ENCODE measurements at regions of chr16 and their contacts with region 1.

Region 1: DNA sequence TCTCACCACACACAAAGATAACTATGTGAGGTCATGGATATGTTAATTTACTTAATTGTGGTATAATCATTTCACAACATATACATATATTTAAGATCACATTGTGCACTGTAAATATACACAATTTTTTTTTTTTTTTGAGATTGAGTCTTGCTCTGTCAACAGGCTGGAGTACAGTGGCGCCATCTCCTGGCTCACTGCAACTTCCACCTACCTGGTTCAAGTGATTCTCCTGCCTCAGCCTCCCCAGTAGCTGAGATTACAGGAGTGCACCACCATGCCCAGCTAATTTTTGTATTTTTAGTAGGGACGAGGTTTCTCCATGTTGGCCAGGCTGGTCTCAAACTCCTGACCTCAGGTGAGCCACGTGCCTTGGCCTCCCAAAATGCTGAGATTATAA is 11.5 kb upstream of the PRSS54 start:
- DNase-seq: peak; percentile 42
- H3K4me3 ChIP-seq: no peak overlapping the region
- H3K27ac ChIP-seq: no peak overlapping the region
- H3K4me1 ChIP-seq: no peaks in the 10 kb centered on the region
- H3K27me3 ChIP-seq: no peaks in the 10 kb centered on the region
- CTCF ChIP-seq: peak; percentile 70

Region 2: DNA sequence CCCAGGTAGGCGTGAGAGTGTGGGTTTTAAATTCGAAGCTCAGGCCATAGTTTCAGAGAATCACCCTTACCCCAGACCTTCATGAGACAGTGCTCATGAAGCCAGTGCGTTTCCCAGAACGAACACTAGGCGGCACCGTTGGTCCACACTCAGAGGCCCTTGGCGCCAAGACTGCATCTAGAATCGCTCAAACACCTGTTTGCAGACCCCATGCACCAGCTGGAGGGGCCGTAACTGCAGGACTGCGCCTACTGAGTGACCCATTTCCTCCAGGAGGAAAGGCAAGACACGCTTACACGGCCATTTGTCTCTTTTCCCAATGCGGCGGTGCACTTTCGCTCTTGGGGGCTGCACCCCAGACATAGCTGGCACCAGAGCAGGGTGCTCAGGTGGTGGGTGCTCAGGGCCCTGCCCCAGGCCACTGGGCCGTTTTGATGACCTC is 729.9 kb before region 1 on chr16:
- CTCF ChIA-PET with region 1: no interaction called
- POLR2A ChIA-PET with region 1: no interaction called
- intact Hi-C with region 1: loop called (anchors 10 kb)
- DNase-seq: peak; percentile 75
- H3K4me3 ChIP-seq: no peak overlapping the region
- H3K27ac ChIP-seq: no peak overlapping the region
- H3K4me1 ChIP-seq: no peaks in the 10 kb centered on the region
- H3K27me3 ChIP-seq: no peaks in the 10 kb centered on the region
- CTCF ChIP-seq: peak; percentile 97

Region 3: DNA sequence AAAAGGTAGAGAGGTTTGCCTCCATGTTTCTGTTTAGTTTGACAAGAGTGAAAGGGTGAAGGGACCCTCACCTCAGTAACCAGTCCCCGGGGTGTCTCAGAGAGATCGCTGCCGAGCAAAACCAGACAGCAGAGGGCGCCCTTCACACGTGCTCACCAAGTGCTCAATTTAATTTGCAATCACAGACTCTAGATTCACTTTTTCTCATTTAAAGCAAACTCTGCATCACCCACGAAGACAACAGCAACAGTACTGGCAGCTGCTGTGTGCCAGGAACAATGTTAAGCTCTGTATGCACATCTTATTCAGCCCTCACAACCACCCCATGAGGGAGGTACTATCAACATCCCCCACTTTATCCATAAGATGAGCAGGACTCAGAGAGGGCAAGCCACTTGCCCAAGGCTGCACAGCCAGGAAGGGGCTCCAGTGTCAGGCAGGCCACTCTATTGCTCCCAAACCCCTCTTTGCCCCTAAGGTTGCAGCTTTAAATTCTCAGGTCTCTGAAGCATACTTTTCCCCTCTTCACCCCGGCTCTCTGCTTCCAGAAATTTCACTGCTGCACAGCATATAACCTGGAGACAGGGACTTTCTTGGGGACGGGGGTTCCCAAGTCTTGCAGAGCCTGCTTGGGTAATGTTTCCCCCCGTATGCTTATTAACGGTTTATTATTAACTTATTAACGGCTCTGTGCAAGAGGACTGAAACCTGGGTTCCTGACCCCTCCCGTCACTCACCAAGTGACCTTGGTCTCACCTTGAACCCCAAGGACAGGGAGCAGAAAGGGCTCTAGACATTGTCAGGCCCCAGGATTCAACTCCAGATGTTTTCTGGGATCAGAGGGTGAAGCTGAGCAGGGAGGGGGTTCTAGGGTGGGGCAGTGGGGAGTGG is 406.3 kb before region 1 on chr16:
- CTCF ChIA-PET with region 1: interaction called, 7 read pairs
- POLR2A ChIA-PET with region 1: no interaction called
- intact Hi-C with region 1: loop called (anchors 5 kb)
- DNase-seq: peak; percentile 79
- H3K4me3 ChIP-seq: no peak overlapping the region
- H3K27ac ChIP-seq: no peak overlapping the region
- H3K4me1 ChIP-seq: no peaks in the 10 kb centered on the region
- H3K27me3 ChIP-seq: no peaks in the 10 kb centered on the region
- CTCF ChIP-seq: peak; percentile 94

Region 4: GRCh38 chr16:58020628-58021139 is 285.6 kb before region 1 on chr16:
- CTCF ChIA-PET with region 1: no interaction called
- POLR2A ChIA-PET with region 1: no interaction called
- intact Hi-C with region 1: loop called (anchors 2 kb)
- DNase-seq: peak; percentile 55
- H3K4me3 ChIP-seq: no peak overlapping the region
- H3K27ac ChIP-seq: no peak overlapping the region
- H3K4me1 ChIP-seq: peaks cover 23% of the 10 kb centered on the region
- H3K27me3 ChIP-seq: no peaks in the 10 kb centered on the region
- CTCF ChIP-seq: peak; percentile 96

Region 5: GRCh38 chr16:58336332-58337089 is 30.2 kb after region 1 on chr16:
- CTCF ChIA-PET with region 1: interaction called, 10 read pairs
- POLR2A ChIA-PET with region 1: no interaction called
- intact Hi-C with region 1: no loop called
- DNase-seq: peak; percentile 83
- H3K4me3 ChIP-seq: peak overlapping the region; percentile 28
- H3K27ac ChIP-seq: no peak overlapping the region
- H3K4me1 ChIP-seq: peaks cover 5% of the 10 kb centered on the region
- H3K27me3 ChIP-seq: no peaks in the 10 kb centered on the region
- CTCF ChIP-seq: peak; percentile 96

Region 6: GRCh38 chr16:58717994-58718393 is 411.7 kb after region 1 on chr16:
- CTCF ChIA-PET with region 1: no interaction called
- POLR2A ChIA-PET with region 1: no interaction called
- intact Hi-C with region 1: no loop called
- DNase-seq: no peak
- H3K4me3 ChIP-seq: no peak overlapping the region
- H3K27ac ChIP-seq: no peak overlapping the region
- H3K4me1 ChIP-seq: no peaks in the 10 kb centered on the region
- H3K27me3 ChIP-seq: no peaks in the 10 kb centered on the region
- CTCF ChIP-seq: no peak

Measured in A673 (cell line).